ENCODE measurements at regions of chr18 and their contacts with region 1.

Region 1: GRCh38 chr18:11851146-11851805 is at the start of gene CHMP1B:
- DNase-seq: peak; percentile 98
- ATAC-seq: peak; percentile 94
- H3K4me3 Mint-ChIP-seq: peak within 1 kb of the TSS; percentile 100
- H3K27ac Mint-ChIP-seq: peak within 1 kb of the TSS; percentile 99
- H3K4me1 Mint-ChIP-seq: peaks cover 52% of the 10 kb centered on the region
- H3K27me3 Mint-ChIP-seq: no peaks in the 10 kb centered on the region
- CTCF ChIP-seq: no peak
- total RNA-seq, gene CHMP1B: 28.5 and 29.4 TPM in 2 replicates

Region 2: GRCh38 chr18:11789731-11790510 is 61.4 kb before region 1 on chr18:
- CTCF ChIA-PET with region 1: no interaction called
- POLR2A ChIA-PET with region 1: no interaction called
- intact Hi-C with region 1: no loop called
- DNase-seq: no peak
- ATAC-seq: no peak
- H3K4me3 Mint-ChIP-seq: no peak overlapping the region
- H3K27ac Mint-ChIP-seq: no peak overlapping the region
- H3K4me1 Mint-ChIP-seq: peaks cover 7% of the 10 kb centered on the region
- H3K27me3 Mint-ChIP-seq: peaks cover 21% of the 10 kb centered on the region
- CTCF ChIP-seq: no peak

Region 3: GRCh38 chr18:11883153-11883552 is 31.9 kb after region 1 on chr18:
- CTCF ChIA-PET with region 1: no interaction called
- POLR2A ChIA-PET with region 1: interaction called, 8 read pairs
- intact Hi-C with region 1: loop called (anchors 1 kb)
- DNase-seq: no peak
- ATAC-seq: peak; percentile 95
- H3K4me3 Mint-ChIP-seq: peak overlapping the region; percentile 6
- H3K27ac Mint-ChIP-seq: peak overlapping the region; percentile 74
- H3K4me1 Mint-ChIP-seq: peaks cover 48% of the 10 kb centered on the region
- H3K27me3 Mint-ChIP-seq: no peaks in the 10 kb centered on the region
- CTCF ChIP-seq: no peak

Region 4: GRCh38 chr18:12027046-12027445 is 175.8 kb after region 1 on chr18:
- CTCF ChIA-PET with region 1: no interaction called
- POLR2A ChIA-PET with region 1: no interaction called
- intact Hi-C with region 1: no loop called
- DNase-seq: no peak
- ATAC-seq: no peak
- H3K4me3 Mint-ChIP-seq: no peak overlapping the region
- H3K27ac Mint-ChIP-seq: no peak overlapping the region
- H3K4me1 Mint-ChIP-seq: peaks cover 6% of the 10 kb centered on the region
- H3K27me3 Mint-ChIP-seq: no peaks in the 10 kb centered on the region
- CTCF ChIP-seq: no peak

Region 5: DNA sequence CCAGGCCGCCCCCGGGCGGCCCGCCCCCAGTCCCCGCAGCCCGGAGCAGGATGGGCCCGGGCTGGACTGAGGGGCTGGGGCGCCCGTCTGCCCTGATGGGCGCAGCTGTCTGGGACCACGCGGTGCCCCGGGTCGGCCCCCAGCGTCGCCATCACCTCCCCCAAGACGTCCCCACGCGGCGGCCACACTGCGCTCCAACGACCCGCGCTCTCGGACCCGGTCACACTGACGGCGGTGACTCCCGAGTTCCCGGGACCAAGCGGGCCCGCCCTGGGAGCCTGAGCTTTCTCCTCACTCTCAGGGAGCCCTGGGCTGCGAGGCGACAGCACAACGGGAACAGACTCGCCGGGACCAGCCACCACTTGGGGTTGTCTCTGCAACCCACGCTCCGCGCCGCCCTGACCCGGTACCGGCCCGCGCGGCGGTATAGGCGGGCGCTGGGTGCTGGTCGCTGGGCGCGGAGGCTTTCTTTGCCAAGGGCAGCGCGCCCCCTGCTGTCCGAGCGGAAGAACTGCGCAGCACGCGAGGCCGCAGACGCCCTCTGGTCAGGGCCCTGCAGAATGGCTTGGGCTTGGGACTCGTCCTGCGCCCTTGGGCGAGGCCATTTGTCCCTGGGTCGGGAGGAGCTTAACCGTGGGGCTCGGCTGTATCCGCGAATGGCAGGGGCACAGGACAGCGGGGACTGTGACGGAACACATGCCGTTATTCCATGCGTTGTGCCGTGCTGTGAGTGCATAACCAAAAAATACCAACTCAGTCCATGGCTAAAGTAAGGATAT is 187.6 kb after region 1 on chr18:
- CTCF ChIA-PET with region 1: no interaction called
- POLR2A ChIA-PET with region 1: no interaction called
- intact Hi-C with region 1: loop called (anchors 5 kb)
- DNase-seq: peak; percentile 76
- ATAC-seq: peak; percentile 98
- H3K4me3 Mint-ChIP-seq: peak overlapping the region; percentile 76
- H3K27ac Mint-ChIP-seq: no peak overlapping the region
- H3K4me1 Mint-ChIP-seq: peaks cover 12% of the 10 kb centered on the region
- H3K27me3 Mint-ChIP-seq: peaks cover 7% of the 10 kb centered on the region
- CTCF ChIP-seq: peak; percentile 83

Region 6: DNA sequence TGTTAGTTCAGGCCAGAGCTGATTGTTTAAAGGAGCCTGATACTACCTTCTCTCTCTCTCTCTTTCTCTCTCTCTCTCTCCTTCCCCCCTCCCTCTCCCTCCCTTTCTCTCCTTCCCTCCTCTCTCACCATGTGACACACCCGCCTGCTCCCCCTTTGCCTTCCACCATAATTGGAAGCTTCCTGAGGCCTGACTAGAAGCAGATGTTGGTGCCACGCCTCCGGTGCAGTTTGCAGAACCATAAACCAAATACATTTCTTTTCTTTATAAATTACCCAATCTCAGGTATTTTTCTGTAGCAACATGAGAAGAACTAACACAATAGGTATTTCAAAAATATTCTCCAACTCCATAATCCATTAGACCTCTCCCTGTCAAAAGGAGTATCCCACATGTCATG is 304.7 kb after region 1 on chr18:
- CTCF ChIA-PET with region 1: no interaction called
- POLR2A ChIA-PET with region 1: no interaction called
- intact Hi-C with region 1: no loop called
- DNase-seq: no peak
- ATAC-seq: no peak
- H3K4me3 Mint-ChIP-seq: no peak overlapping the region
- H3K27ac Mint-ChIP-seq: no peak overlapping the region
- H3K4me1 Mint-ChIP-seq: no peaks in the 10 kb centered on the region
- H3K27me3 Mint-ChIP-seq: peaks cover 3% of the 10 kb centered on the region
- CTCF ChIP-seq: no peak

Region 7: DNA sequence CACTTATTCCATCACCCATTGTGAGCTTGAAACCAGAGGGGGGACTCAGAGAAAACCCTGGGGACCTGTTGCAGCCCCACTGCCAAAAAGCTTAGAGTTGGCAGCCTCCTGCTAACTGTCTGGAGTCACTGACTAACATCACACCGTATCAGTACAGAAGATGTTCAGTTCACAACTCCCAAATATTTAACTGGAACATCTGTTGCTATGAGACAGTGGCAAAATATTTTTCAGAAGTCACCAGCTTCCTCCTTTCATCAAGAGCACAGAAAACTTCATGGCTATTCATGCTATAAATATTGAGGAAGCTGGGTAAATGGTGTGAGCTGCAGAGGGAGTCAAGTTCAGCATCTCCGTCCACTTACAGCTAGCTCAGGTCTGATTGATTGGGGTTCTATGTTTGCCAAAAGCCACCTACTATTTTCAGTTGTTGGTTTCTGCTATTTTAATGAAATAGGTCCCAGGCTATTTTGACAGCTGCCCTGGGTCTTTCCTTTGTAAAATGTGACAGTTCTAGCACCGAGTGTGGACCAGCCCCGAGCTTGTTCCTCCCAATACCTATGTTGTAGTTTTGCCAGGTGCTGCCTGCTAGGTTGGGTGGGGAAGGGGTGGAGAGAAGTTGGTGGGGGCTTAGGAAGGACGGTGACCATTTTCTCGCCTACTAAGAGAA is 466.5 kb after region 1 on chr18:
- CTCF ChIA-PET with region 1: no interaction called
- POLR2A ChIA-PET with region 1: no interaction called
- intact Hi-C with region 1: loop called (anchors 10 kb)
- DNase-seq: no peak
- ATAC-seq: peak; percentile 25
- H3K4me3 Mint-ChIP-seq: peak overlapping the region; percentile 37
- H3K27ac Mint-ChIP-seq: peak overlapping the region; percentile 61
- H3K4me1 Mint-ChIP-seq: peaks cover 72% of the 10 kb centered on the region
- H3K27me3 Mint-ChIP-seq: no peaks in the 10 kb centered on the region
- CTCF ChIP-seq: no peak

Region 8: GRCh38 chr18:12990967-12991838 is 1139.9 kb after region 1 on chr18 and contains the start of gene CEP192:
- CTCF ChIA-PET with region 1: no interaction called
- POLR2A ChIA-PET with region 1: no interaction called
- intact Hi-C with region 1: loop called (anchors 2 kb)
- DNase-seq: peak; percentile 93
- ATAC-seq: peak; percentile 96
- H3K4me3 Mint-ChIP-seq: peak within 1 kb of the TSS; percentile 93
- H3K27ac Mint-ChIP-seq: peak within 1 kb of the TSS; percentile 94
- H3K4me1 Mint-ChIP-seq: peaks cover 32% of the 10 kb centered on the region
- H3K27me3 Mint-ChIP-seq: no peaks in the 10 kb centered on the region
- CTCF ChIP-seq: no peak
- total RNA-seq, gene CEP192: 33.6 and 34.2 TPM in 2 replicates